OCI-LY7 (cell line): ENCODE measurements at regions of chr6 and their contacts with region 1.

Region 1: GRCh38 chr6:80647156-80647555 is 540.7 kb downstream of the BCKDHB start:
- DNase-seq: no peak
- H3K4me3 ChIP-seq: no peak overlapping the region
- H3K27ac ChIP-seq: no peak overlapping the region
- H3K4me1 ChIP-seq: no peaks in the 10 kb centered on the region
- CTCF ChIP-seq: no peak

Region 2: GRCh38 chr6:81216651-81217050 is 569.5 kb after region 1 on chr6:
- CTCF ChIA-PET with region 1: no interaction called
- POLR2A ChIA-PET with region 1: interaction called, 10 read pairs
- intact Hi-C with region 1: no loop called
- DNase-seq: no peak
- H3K4me3 ChIP-seq: no peak overlapping the region
- H3K27ac ChIP-seq: no peak overlapping the region
- H3K4me1 ChIP-seq: no peaks in the 10 kb centered on the region
- CTCF ChIP-seq: no peak